Ascending aorta (tissue), 2 donors: ENCODE measurements at regions of chr15 and their contacts with region 1.

Region 1: GRCh38 chr15:44163370-44163769 is 31.7 kb downstream of the FRMD5 start:
- DNase-seq: no peak
- H3K4me3 ChIP-seq: no peak overlapping the region
- H3K27ac ChIP-seq: no peak overlapping the region
- H3K4me1 ChIP-seq: no peaks in the 10 kb centered on the region
- H3K27me3 ChIP-seq: no peaks in the 10 kb centered on the region
- CTCF ChIP-seq: no peak

Region 2: DNA sequence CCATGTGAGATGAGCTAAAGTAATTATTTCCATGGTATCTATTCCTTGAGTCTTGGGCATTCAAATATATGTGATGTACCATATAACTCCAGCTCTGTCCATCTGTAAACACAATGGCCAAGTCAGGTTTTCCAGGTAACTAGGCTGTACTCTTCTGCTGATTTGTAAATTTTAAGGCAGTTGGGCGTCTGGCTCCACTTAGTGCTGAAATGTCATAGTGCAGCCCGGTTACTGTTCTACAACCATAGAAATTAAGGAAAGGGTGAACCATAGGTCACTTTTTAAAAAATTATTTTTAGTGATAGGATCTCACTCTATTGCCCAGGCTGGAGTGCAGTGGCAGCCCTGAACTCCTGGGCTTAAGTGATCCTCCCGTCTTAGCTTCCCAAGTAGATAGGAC is 80.5 kb after region 1 on chr15:
- intact Hi-C with region 1: loop called (anchors 10 kb)
- DNase-seq: no peak
- H3K4me3 ChIP-seq: no peak overlapping the region
- H3K27ac ChIP-seq: no peak overlapping the region
- H3K4me1 ChIP-seq: no peaks in the 10 kb centered on the region
- H3K27me3 ChIP-seq: no peaks in the 10 kb centered on the region
- CTCF ChIP-seq: no peak

Region 3: DNA sequence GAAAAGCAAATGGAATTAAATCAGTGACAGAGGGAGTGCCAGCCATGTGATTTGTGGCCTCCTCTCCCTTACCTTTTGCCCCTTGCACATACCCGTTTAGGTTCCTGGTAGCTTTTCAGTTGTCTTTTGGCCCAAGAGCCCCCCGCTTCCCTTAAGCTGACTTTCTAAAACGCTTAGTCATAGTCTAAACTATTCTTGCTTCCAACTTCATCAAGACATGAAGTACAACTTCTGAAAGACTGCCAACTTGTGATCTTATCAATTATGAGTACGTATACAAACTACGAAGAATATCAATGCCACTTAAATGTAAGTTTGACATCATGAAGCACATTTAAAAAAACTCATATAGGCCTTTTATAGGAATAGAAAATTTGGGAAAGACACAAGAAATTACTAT is 435.5 kb after region 1 on chr15:
- intact Hi-C with region 1: no loop called
- DNase-seq: no peak
- H3K4me3 ChIP-seq: no peak overlapping the region
- H3K27ac ChIP-seq: peak overlapping the region in 1 of 2 donors; percentile 50
- H3K4me1 ChIP-seq: no peaks in the 10 kb centered on the region
- H3K27me3 ChIP-seq: no peaks in the 10 kb centered on the region
- CTCF ChIP-seq: no peak